Activated naive CD4-positive, alpha-beta T cell treated with anti-CD3 and anti-CD28 coated beads for 36 hours (primary cell): ENCODE measurements at regions of chr12 and their contacts with region 1.

Region 1: GRCh38 chr12:92987362-92987761 is 58.3 kb upstream of the EEA1 start:
- DNase-seq: no peak
- H3K4me3 Mint-ChIP-seq: peak overlapping the region; percentile 26
- H3K27ac Mint-ChIP-seq: peak overlapping the region; percentile 78
- H3K4me1 Mint-ChIP-seq: peaks cover 26% of the 10 kb centered on the region
- H3K27me3 Mint-ChIP-seq: no peaks in the 10 kb centered on the region

Region 2: GRCh38 chr12:92977326-92977725 is 10.0 kb before region 1 on chr12:
- CTCF ChIA-PET with region 1: interaction called, 22 read pairs
- intact Hi-C with region 1: no loop called
- DNase-seq: peak; percentile 35
- H3K4me3 Mint-ChIP-seq: peak overlapping the region; percentile 45
- H3K27ac Mint-ChIP-seq: peak overlapping the region; percentile 19
- H3K4me1 Mint-ChIP-seq: peaks cover 27% of the 10 kb centered on the region
- H3K27me3 Mint-ChIP-seq: no peaks in the 10 kb centered on the region

Region 3: GRCh38 chr12:93098077-93098476 is 110.7 kb after region 1 on chr12:
- CTCF ChIA-PET with region 1: interaction called, 26 read pairs
- intact Hi-C with region 1: loop called (anchors 2 kb)
- DNase-seq: peak; percentile 91
- H3K4me3 Mint-ChIP-seq: no peak overlapping the region
- H3K27ac Mint-ChIP-seq: peak overlapping the region; percentile 38
- H3K4me1 Mint-ChIP-seq: peaks cover 10% of the 10 kb centered on the region
- H3K27me3 Mint-ChIP-seq: no peaks in the 10 kb centered on the region

Region 4: DNA sequence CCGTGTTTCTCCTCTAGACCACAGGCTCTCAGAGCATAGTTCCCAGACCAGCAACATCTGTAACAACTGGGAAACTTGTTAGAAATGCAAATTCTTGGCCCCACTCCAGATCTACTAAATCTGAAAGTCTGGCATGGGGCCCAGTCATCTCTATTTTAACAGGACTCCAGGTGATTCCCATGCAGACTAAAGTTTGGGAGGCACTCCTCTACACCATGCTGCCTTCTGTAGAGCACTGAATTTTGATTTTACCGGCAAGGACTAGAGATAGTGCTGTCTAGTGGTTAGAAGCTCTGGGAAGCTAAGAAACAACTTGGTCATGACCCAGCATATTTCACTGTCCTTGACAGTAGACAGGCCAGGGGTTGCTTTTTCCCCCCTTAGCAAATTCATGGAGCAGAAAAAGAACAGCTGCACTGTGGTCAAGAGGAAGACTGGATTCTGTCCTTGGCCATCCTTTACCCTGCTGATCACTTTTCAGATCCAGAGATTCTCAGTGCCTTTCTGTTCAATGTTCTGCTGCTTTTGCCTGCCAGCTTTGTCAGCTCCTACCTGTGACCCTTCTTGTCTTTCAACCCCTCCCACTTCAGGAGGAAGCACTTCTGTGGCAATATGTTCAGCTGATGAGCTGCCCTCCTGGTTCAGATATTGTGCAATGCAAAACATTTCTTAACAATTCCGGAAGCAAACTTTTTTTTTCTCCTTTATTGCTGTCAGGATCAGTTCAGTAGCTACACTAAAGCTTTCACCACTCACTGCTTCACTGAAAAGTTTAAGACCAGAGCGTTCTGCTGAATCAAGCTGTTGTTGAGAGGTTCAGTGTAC is 256.5 kb after region 1 on chr12:
- CTCF ChIA-PET with region 1: interaction called, 6 read pairs
- intact Hi-C with region 1: loop called (anchors 2 kb)
- DNase-seq: peak; percentile 53
- H3K4me3 Mint-ChIP-seq: peak overlapping the region; percentile 49
- H3K27ac Mint-ChIP-seq: peak overlapping the region; percentile 82
- H3K4me1 Mint-ChIP-seq: peaks cover 34% of the 10 kb centered on the region
- H3K27me3 Mint-ChIP-seq: no peaks in the 10 kb centered on the region

Region 5: GRCh38 chr12:93419388-93420034 is 432.1 kb after region 1 on chr12:
- CTCF ChIA-PET with region 1: interaction called, 22 read pairs
- intact Hi-C with region 1: loop called (anchors 1 kb)
- DNase-seq: no peak
- H3K4me3 Mint-ChIP-seq: no peak overlapping the region
- H3K27ac Mint-ChIP-seq: no peak overlapping the region
- H3K4me1 Mint-ChIP-seq: peaks cover 88% of the 10 kb centered on the region
- H3K27me3 Mint-ChIP-seq: no peaks in the 10 kb centered on the region

Region 6: GRCh38 chr12:93766796-93767523 is 779.6 kb after region 1 on chr12:
- CTCF ChIA-PET with region 1: interaction called, 4 read pairs
- intact Hi-C with region 1: loop called (anchors 1 kb)
- DNase-seq: peak; percentile 71
- H3K4me3 Mint-ChIP-seq: no peak overlapping the region
- H3K27ac Mint-ChIP-seq: no peak overlapping the region
- H3K4me1 Mint-ChIP-seq: peaks cover 17% of the 10 kb centered on the region
- H3K27me3 Mint-ChIP-seq: no peaks in the 10 kb centered on the region